HEK293 (cell line): ENCODE measurements at regions of chr1 and their contacts with region 1.

Region 1: GRCh38 chr1:202315576-202316168 is 26.1 kb downstream of the UBE2T start:
- H3K4me3 ChIP-seq: no peak overlapping the region
- H3K27ac ChIP-seq: no peak overlapping the region
- H3K4me1 ChIP-seq: no peaks in the 10 kb centered on the region; the same call in 1 of the 2 replicates
- CTCF ChIP-seq: peak; percentile 79

Region 2: DNA sequence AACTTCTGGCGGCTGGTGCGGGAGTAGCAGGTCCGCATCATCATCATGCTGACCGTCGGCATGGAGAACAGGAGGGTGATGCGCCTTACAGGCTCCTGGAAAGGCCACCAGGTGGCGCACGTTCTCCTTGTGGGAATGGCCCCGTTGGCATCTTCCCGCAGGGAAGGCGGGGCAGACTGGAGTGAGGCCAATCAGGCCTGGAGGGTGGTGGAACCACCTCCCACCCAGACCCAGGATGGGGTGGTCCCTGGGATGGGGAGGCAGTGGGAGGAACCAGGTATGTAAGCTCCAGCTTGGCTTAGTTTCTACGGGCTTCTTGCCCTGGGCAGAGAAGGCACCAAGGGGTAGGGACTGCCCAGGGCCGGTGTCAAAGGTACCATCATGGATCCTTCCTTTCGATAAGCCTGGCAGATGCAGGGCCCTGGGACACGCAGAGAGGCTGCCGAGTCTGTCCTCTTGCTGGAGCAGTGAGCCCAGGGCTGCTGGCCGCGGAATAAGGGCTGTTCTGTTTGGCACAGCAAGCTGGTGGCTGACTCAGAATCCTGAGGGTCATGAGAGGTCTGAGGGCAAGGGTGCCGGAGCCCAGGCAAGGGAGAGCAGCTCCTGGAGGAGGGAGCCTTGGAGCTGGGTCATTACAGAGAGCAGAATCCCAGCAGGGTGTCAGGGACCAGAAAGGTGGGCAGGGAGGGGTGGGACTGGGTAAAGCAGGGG is 130.8 kb before region 1 on chr1:
- CTCF ChIA-PET with region 1: interaction called, 30 read pairs
- POLR2A ChIA-PET with region 1: no interaction called
- H3K4me3 ChIP-seq: no peak overlapping the region
- H3K27ac ChIP-seq: no peak overlapping the region
- H3K4me1 ChIP-seq: no peaks in the 10 kb centered on the region
- CTCF ChIP-seq: peak; percentile 88

Region 3: GRCh38 chr1:202264300-202264699 is 51.4 kb before region 1 on chr1:
- CTCF ChIA-PET with region 1: interaction called, 14 read pairs
- POLR2A ChIA-PET with region 1: no interaction called
- H3K4me3 ChIP-seq: no peak overlapping the region
- H3K27ac ChIP-seq: no peak overlapping the region
- H3K4me1 ChIP-seq: no peaks in the 10 kb centered on the region
- CTCF ChIP-seq: no peak

Region 4: GRCh38 chr1:202283379-202283844 is 32.3 kb before region 1 on chr1:
- CTCF ChIA-PET with region 1: interaction called, 19 read pairs
- POLR2A ChIA-PET with region 1: interaction called, 4 read pairs
- H3K4me3 ChIP-seq: no peak overlapping the region
- H3K27ac ChIP-seq: no peak overlapping the region
- H3K4me1 ChIP-seq: peaks cover 17% of the 10 kb centered on the region
- CTCF ChIP-seq: no peak

Region 5: GRCh38 chr1:202329891-202330290 is 14.2 kb after region 1 on chr1:
- CTCF ChIA-PET with region 1: interaction called, 31 read pairs
- POLR2A ChIA-PET with region 1: no interaction called
- H3K4me3 ChIP-seq: no peak overlapping the region
- H3K27ac ChIP-seq: no peak overlapping the region
- H3K4me1 ChIP-seq: no peaks in the 10 kb centered on the region
- CTCF ChIP-seq: no peak

Region 6: DNA sequence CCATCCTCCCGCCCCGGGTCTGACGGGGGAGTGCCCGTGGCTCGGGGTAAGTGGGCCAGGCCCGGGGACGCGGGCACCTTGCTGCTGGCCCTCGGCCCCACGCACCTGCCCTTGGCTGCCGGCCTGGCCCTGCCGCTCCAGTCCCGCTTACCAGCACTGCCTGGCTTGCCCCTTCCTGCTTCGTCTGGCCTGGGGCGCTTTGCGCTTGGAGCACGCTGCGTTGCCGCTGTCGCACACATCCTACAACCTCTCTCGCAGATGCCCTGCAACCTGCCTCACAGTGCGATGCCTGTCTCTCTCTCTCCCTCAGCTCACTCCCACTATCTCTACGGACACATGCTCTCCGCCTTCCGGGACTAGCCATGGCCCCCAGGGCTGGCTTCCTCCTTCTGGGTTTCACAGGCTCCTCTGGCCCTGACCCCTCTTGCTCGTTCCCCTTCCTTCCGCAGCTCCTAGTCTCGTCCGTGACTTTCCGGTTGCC is 760.4 kb after region 1 on chr1:
- CTCF ChIA-PET with region 1: no interaction called
- POLR2A ChIA-PET with region 1: no interaction called
- H3K4me3 ChIP-seq: no peak overlapping the region
- H3K27ac ChIP-seq: no peak overlapping the region
- H3K4me1 ChIP-seq: no peaks in the 10 kb centered on the region
- CTCF ChIP-seq: no peak